ENCODE measurements at regions of chr6 and their contacts with region 1.

Region 1: GRCh38 chr6:71533939-71534379 is 245.3 kb downstream of the OGFRL1 start:
- DNase-seq: no peak
- ATAC-seq: peak in 1 of 4 donors; percentile 38
- H3K4me3 ChIP-seq: no peak overlapping the region
- H3K27ac ChIP-seq: no peak overlapping the region
- H3K4me1 ChIP-seq: peaks cover 0 to 8% (median 7%) of the 10 kb centered on the region in 3 donors
- H3K27me3 ChIP-seq: no peaks in the 10 kb centered on the region
- CTCF ChIP-seq: peak in 3 of 4 donors; percentile 31 to 58 (median 49)

Region 2: GRCh38 chr6:71324194-71324785 is 209.7 kb before region 1 on chr6:
- intact Hi-C with region 1: no loop called
- DNase-seq: no peak
- ATAC-seq: peak in 1 of 4 donors; percentile 68
- H3K4me3 ChIP-seq: no peak overlapping the region
- H3K27ac ChIP-seq: no peak overlapping the region
- H3K4me1 ChIP-seq: peaks cover 0 to 7% (median 0%) of the 10 kb centered on the region in 3 donors
- H3K27me3 ChIP-seq: no peaks in the 10 kb centered on the region
- CTCF ChIP-seq: no peak

Region 3: DNA sequence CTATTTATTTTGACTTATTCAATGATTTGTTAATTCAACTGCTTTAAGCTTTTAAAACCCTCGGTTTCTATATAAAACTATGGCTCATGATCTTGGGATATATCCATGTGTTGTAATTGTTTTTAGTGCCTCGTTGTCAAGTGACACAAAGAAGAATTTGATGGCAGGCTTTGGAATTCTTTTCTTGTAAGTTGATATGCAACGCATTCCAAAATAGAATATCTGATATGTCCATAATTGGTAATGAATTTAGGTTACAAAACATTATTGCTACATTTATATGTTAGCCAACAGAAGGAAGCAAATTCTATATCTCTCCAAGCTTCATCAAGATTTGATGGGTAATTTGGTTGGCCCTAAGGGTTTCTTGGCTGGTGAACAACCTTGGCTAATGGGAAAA is 132.0 kb after region 1 on chr6:
- intact Hi-C with region 1: no loop called
- DNase-seq: no peak
- ATAC-seq: no peak
- H3K4me3 ChIP-seq: no peak overlapping the region
- H3K27ac ChIP-seq: no peak overlapping the region
- H3K4me1 ChIP-seq: no peaks in the 10 kb centered on the region
- H3K27me3 ChIP-seq: no peaks in the 10 kb centered on the region
- CTCF ChIP-seq: no peak

Region 4: GRCh38 chr6:72084992-72085569 is 551.1 kb after region 1 on chr6:
- intact Hi-C with region 1: loop called in 2 of 3 experiments (anchors 5 to 10 kb)
- DNase-seq: no peak
- ATAC-seq: no peak
- H3K4me3 ChIP-seq: no peak overlapping the region
- H3K27ac ChIP-seq: no peak overlapping the region
- H3K4me1 ChIP-seq: no peaks in the 10 kb centered on the region
- H3K27me3 ChIP-seq: no peaks in the 10 kb centered on the region
- CTCF ChIP-seq: peak in 2 of 4 donors; percentile 28 to 30

Measured in pancreas (tissue), 10 donors.